Ascending aorta (tissue), 2 donors: ENCODE measurements at regions of chr15 and their contacts with region 1.

Region 1: DNA sequence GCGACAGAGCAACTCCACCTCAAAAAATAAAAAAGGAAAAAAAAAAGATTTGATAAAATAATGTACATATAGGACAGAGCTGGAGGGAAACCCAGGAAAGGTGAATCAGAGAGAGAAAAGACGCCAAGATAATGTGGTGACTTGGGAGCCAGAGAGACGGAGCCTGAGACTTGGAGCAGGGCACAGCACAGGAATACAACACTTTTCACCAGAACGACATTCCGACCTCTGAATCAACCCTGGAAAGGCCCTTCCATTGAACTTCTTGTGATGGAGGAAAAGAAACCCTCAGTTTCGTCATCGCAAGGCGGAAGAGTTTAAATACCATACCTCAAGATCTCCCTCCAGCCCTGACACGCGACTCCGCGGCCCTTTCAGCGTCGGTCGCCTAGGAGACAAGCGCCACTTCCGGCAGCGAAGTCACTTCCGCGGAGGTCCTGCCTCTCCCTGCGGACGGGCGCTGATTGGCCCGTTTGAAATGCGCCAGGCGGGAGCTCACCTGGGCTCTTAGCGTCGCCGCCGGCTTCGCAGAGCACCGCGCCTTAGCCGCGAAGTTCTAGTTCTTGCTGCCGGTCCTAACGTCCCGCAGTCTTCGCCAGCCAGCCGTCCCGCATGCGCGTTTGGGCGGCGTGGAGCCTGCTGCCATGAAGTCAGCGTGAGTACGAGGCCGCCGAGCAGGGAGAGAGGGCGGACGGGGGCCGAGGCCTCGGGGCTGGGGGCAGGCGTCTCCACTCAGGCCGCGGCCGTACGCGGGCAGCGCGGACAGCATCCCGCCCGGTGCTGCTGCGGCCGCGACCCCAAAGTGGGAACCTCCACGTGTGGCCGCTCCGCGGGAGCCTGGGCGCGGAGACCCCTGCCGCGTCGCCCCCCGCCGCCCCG is at the start of gene KIF23:
- DNase-seq: peak; percentile 49 to 92
- H3K4me3 ChIP-seq: peak within 1 kb of the TSS; percentile 91 to 97
- H3K27ac ChIP-seq: peak within 1 kb of the TSS; percentile 79 to 97
- H3K4me1 ChIP-seq: peaks cover 0 to 22% of the 10 kb centered on the region in 2 donors
- H3K27me3 ChIP-seq: no peaks in the 10 kb centered on the region
- CTCF ChIP-seq: no peak
- total RNA-seq, gene KIF23: 1.8 TPM

Region 2: DNA sequence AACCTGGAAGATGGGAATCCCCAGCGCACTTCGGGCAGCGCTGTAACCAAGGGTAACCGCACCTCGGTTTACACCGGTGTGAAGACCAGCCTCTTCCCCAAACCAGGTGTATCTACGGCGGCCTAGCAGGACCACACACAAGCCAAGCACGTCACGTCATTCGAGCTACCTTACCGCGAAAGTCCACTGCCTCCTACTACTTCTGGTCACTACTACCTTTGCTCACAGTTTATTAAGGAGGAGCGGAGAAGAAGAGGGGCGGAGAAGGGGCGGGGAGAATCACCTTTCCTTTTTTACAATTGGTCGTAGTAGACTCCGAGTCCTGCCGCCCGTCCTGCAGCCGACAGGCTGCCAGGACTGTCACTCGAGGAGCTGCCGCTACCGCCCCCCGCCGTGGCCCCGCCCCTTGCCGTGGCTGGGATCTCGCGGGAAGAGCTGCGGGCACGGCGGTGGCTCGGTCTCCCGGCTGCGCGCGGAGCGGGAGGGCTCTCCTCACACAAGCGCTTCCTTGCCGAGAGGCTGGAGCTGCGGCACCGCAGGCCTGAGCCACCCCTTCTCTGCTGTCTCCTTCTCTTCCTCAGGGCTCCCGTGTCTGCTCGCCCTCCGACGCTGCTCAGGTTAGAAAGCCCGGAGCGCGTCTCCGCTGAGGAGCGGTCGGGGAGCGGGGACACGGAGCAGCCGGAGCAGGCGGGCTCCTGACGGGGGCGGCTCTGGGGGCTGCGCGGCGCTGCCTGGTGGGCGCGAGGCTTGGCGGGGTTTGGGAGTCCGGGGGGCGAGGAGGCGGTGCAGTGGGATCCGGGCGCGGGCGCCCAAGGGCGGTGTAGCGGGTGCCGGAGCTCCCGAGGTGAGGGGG is 253.7 kb before region 1 on chr15 and contains the start of gene GLCE:
- intact Hi-C with region 1: loop called (anchors 2 kb)
- DNase-seq: peak; percentile 86 to 96
- H3K4me3 ChIP-seq: peak within 1 kb of the TSS; percentile 77 to 91
- H3K27ac ChIP-seq: peak within 1 kb of the TSS; percentile 29 to 57
- H3K4me1 ChIP-seq: peaks cover 3 to 4% of the 10 kb centered on the region in 2 donors
- H3K27me3 ChIP-seq: no peaks in the 10 kb centered on the region
- CTCF ChIP-seq: no peak
- total RNA-seq, gene GLCE: 13.9 TPM

Region 3: GRCh38 chr15:69452692-69453521 is 38.8 kb after region 1 on chr15 and contains the start of gene RPLP1:
- intact Hi-C with region 1: loop called (anchors 1 kb)
- DNase-seq: peak; percentile 88 to 98
- H3K4me3 ChIP-seq: peak within 1 kb of the TSS; percentile 87 to 89
- H3K27ac ChIP-seq: peak within 1 kb of the TSS; percentile 96 to 97
- H3K4me1 ChIP-seq: peaks cover 8 to 17% of the 10 kb centered on the region in 2 donors
- H3K27me3 ChIP-seq: no peaks in the 10 kb centered on the region
- CTCF ChIP-seq: no peak
- total RNA-seq, gene RPLP1: 379 TPM

Region 4: DNA sequence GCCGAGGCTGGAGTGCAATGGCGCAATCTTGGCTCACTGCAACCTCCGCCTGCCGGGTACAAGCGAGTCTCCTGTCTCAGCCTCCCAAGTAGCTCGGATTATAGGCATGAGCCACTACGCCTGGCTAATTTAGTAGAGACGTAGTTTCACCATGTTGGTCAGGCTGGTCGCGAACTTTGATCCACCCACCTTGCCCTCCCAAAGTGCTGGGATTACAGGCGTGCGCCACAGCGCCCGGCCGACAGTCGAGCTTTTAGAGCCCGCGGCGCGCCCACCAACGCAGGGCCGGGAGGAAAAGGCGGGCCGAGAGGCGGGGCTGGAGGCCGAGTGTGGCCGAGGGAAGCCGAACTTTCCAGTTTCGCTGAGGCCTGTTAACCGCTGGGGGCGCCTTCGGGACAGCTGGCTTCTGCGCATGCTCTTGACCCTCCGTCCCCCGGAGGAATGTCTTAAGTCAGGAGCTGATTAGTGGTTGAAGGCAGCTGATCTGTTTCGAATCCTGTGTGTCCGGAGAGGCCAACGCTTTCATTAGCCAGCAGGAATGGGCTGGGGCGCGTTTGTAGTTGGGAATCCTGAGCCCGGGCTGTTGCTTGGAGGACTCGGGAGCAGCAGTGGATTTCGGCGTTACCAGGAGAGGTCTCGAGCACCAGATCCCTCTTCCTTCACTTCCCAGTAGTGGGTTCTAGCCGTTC is 48.6 kb after region 1 on chr15:
- intact Hi-C with region 1: loop called (anchors 2 kb)
- DNase-seq: peak; percentile 87 to 98
- H3K4me3 ChIP-seq: peak overlapping the region; percentile 66 to 67
- H3K27ac ChIP-seq: peak overlapping the region; percentile 81 to 86
- H3K4me1 ChIP-seq: peaks cover 0 to 11% of the 10 kb centered on the region in 2 donors
- H3K27me3 ChIP-seq: no peaks in the 10 kb centered on the region
- CTCF ChIP-seq: peak; percentile 83 to 89 (median 88)